ENCODE measurements at regions of chr11 and their contacts with region 1.

Region 1: DNA sequence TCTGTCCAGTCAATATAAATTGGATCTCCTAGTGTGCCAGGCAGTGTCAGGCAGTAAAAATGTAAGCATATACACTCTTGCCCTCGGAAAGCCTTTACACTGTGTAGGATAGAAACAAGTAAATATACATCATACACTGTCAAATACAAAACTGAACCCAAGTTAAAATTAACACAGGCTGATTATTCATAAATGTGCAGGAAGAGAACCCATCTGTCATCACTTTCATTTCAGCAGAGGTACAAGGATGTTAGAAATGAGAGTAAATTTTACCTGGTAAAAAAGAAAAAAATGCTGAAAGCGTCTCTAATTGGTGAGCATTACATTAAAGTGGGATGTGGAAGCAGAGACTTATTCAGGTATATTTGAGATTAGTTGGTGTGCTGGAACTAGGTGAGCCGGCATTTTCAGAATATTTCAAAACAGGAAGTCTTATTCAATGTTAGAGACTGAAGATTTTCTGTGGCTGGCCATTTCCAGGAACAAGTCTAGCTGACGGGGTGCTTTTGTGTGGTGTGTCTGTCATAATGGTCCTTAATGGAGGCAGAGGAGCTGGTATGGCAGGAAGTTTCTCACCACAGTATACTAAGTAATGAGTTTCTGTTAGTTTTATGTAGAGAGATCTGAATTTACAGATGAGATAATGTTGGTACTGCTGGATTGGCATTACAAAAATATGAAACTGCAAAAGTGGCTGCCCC is 192.6 kb downstream of the CASP12 start:
- DNase-seq: peak; percentile 79
- H3K4me3 Mint-ChIP-seq: peak overlapping the region; percentile 81
- H3K27ac Mint-ChIP-seq: peak overlapping the region; percentile 94
- H3K4me1 Mint-ChIP-seq: peaks cover 55% of the 10 kb centered on the region
- H3K27me3 Mint-ChIP-seq: no peaks in the 10 kb centered on the region

Region 2: GRCh38 chr11:104609311-104610085 is 96.1 kb before region 1 on chr11:
- intact Hi-C with region 1: loop called (anchors 1 kb)
- DNase-seq: peak; percentile 24
- H3K4me3 Mint-ChIP-seq: no peak overlapping the region
- H3K27ac Mint-ChIP-seq: no peak overlapping the region
- H3K4me1 Mint-ChIP-seq: peaks cover 27% of the 10 kb centered on the region
- H3K27me3 Mint-ChIP-seq: peaks cover 7% of the 10 kb centered on the region

Region 3: DNA sequence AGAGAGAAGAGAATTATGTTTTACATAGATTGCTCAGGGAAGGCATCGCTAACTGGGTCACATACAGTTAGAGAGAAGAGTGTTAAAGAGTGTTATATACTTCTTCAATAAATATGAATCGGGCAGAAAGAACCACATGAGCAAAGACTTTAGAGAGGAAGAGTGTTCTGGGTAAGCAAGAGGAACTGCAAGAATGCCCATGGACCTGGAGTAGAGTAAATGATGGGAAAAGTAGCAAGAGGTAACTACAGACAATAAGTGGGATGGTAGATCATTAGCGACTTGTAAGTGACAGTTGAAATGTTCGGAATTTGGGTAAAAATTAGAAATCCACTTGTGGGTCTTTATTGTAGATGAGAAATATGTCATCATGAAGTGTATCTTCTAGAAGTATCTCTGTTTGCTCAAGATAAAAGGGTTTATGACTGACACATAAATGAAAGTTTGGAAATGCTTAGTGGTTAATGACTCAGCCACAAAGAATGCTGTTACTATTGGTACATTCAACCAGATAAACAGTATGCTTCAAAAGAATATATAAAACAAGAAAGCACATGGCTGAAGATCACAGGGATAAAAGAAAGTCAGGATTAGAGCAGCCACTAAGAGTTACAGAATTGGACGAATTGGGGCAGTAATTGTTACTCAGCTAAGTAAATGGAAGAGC is 36.7 kb before region 1 on chr11:
- intact Hi-C with region 1: loop called (anchors 1 kb)
- DNase-seq: no peak
- H3K4me3 Mint-ChIP-seq: no peak overlapping the region
- H3K27ac Mint-ChIP-seq: peak overlapping the region; percentile 19
- H3K4me1 Mint-ChIP-seq: peaks cover 24% of the 10 kb centered on the region
- H3K27me3 Mint-ChIP-seq: peaks cover 5% of the 10 kb centered on the region

Region 4: DNA sequence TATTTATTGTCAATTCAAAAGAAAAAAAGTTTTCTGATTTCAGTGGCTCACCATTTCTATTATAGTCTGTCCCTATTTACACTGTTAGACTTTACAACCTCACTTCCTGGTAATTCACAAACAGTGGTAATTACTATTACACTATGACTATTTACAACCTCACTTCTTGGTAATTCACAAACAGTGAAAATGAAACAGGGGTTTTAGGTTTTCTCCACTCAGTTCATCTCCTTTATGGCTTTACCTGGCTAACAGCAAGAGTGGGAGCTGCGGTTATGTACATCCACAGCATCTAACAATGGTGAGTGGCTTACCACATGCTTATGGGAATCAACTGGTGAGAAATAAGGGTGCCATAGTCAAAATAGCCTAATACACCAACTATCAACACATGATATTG is 26.2 kb after region 1 on chr11:
- intact Hi-C with region 1: loop called (anchors 1 kb)
- DNase-seq: peak; percentile 3
- H3K4me3 Mint-ChIP-seq: no peak overlapping the region
- H3K27ac Mint-ChIP-seq: peak overlapping the region; percentile 50
- H3K4me1 Mint-ChIP-seq: peaks cover 25% of the 10 kb centered on the region
- H3K27me3 Mint-ChIP-seq: no peaks in the 10 kb centered on the region

Region 5: DNA sequence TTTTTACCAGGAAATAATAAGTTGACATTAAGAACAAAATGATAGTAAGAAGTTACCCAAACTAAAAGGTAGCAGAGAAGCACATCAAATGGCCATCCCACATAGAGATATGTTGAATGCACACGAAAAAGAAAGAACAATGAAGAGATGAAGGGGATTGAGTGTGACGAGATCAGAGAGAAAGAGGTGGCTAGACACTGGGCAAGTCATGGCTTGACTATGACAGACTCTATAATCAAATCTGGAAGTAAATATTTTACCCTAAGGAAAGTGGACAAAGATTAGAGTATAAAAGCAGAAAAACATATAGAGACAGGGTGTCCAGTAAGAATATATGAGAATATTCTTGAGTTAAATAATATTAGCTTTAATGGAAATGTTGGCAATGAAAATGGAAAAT is 161.2 kb after region 1 on chr11:
- intact Hi-C with region 1: no loop called
- DNase-seq: no peak
- H3K4me3 Mint-ChIP-seq: no peak overlapping the region
- H3K27ac Mint-ChIP-seq: no peak overlapping the region
- H3K4me1 Mint-ChIP-seq: no peaks in the 10 kb centered on the region
- H3K27me3 Mint-ChIP-seq: peaks cover 3% of the 10 kb centered on the region

Region 6: GRCh38 chr11:104876861-104877431 is 171.3 kb after region 1 on chr11:
- intact Hi-C with region 1: loop called (anchors 5 kb)
- DNase-seq: no peak
- H3K4me3 Mint-ChIP-seq: peak overlapping the region; percentile 50
- H3K27ac Mint-ChIP-seq: peak overlapping the region; percentile 66
- H3K4me1 Mint-ChIP-seq: peaks cover 37% of the 10 kb centered on the region
- H3K27me3 Mint-ChIP-seq: peaks cover 3% of the 10 kb centered on the region

Region 7: GRCh38 chr11:105044921-105045524 is 339.4 kb after region 1 on chr11 and contains the start of gene CARD16:
- intact Hi-C with region 1: loop called (anchors 5 kb)
- DNase-seq: peak; percentile 20
- H3K4me3 Mint-ChIP-seq: peak within 1 kb of the TSS; percentile 90
- H3K27ac Mint-ChIP-seq: peak within 1 kb of the TSS; percentile 90
- H3K4me1 Mint-ChIP-seq: peaks cover 63% of the 10 kb centered on the region
- H3K27me3 Mint-ChIP-seq: no peaks in the 10 kb centered on the region
- total RNA-seq, gene CARD16: 9.5 and 10.5 TPM in 2 replicates

Measured in activated T-helper 1 cell treated with anti-CD3 and anti-CD28 coated beads, Interleukin-12 subunit alpha, Interleukin-12 subunit beta, Interleukin-2, Interleukin-4 antibody, amounts not matched to agents 30 ng/mL and 10 ng/mL and 1 ng/mL, durations not matched to agents 14 hours and 24 hours and 36 hours (primary cell).